ENCODE measurements at regions of chr12 and their contacts with region 1.

Region 1: DNA sequence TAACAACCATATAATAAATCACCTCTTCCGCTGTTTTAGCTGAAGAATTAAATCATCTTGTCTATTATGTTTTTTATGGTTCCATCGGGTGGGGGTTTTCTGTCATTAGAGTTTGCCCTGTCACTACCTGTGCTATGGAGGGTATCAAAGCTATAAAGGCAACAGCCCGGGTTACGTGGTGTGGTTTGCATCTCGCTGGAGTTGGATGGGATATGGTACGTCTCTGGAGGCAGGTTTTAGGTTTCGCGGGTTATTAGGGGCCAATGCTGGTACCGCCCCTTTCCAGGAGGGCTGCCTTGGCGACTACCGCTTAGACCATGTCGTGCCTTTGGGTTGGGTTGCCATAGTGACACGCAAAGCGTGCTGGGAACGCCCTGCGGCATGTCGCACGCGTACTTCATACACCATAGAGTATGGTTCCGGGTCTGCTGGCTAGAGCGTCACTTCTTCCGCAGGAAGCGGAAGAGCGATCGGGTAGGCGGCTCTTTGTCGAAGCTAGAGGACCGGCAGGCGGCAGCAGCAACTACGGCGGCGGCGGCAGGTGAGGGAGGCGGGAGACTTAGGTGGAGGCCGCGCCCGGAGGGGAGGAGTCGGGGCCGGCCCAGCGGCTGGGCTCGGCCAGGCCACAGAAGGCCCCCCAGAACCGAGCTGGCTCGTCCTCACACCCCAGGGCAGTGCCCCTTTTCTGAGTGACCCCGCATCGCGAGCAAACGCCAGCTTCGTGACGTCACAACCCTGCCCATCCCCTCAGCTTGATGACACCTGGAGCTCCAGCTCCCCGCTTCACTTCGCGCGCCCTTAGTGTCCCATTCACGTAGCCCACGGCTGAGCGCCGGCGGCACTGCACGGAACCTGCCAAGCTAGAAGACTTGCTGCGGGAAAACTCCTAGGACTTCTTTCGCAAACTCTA is at the start of gene ZC3H10:
- DNase-seq: peak; percentile 97 to 100
- ATAC-seq: peak; percentile 74 to 82
- H3K4me3 ChIP-seq: peak within 1 kb of the TSS; percentile 71
- H3K27ac ChIP-seq: peak within 1 kb of the TSS; percentile 91 to 96
- H3K4me1 ChIP-seq: peaks cover 20% of the 10 kb centered on the region
- CTCF ChIP-seq: peak; percentile 36
- EP300 ChIP-seq: no peak
- POLR2A ChIP-seq: peak; percentile 96
- RAD21 ChIP-seq: 0 out of 5 replicates have a peak, but pooled peaks of 1 of the 2 experiments have one; percentile 10
- polyA plus RNA-seq, gene ZC3H10: 2.1 and 2.7 TPM in 2 replicates

Region 2: DNA sequence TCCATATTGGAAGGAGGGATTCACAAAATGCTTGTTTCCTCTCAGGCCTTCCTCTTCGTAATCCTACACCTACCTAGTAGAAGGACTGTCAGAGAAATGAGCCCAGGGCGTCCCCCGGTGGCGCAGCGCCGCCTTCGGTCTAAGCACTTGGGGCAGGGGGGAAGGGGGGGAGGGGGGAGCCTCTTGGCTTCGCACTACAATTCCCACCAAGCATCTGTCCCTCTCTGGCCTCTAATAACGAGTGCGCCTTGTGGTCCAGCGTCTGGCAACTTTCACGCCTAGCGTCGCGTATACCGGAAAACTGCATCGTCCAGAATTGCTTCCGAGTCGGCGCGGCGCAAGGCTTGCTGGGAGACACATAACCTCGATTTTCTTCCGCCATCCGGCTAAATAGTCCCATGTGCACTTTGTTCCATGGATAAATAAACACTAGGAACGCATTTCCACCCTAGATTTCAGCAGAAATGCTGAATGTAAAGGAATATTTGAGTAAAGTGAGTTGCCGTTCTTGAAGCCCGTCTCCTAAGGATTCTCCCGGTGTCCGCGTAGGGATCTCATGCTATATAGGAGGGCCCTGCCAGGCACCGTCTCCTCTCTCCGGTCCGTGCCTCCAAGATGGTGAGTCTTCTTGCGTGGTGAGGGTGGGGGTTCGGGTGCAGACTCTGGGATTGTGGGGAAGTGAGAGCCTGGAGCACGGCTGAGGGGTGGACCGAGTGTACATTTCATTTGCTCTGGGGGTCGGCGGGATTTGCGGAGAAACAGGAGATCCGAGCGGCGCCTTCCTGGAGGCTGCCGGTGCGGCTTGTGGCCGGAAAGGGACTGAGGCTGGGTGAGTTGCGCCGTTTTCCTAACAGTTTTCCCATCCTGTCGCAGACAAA is 76.2 kb before region 1 on chr12 and contains the start of gene RPS26:
- CTCF ChIA-PET with region 1: interaction called, 12 read pairs
- POLR2A ChIA-PET with region 1: interaction called, 7 read pairs
- DNase-seq: peak; percentile 91 to 100
- ATAC-seq: peak; percentile 96 to 97
- H3K4me3 ChIP-seq: peak within 1 kb of the TSS; percentile 74
- H3K27ac ChIP-seq: peak within 1 kb of the TSS; percentile 90 to 99
- H3K4me1 ChIP-seq: peaks cover 16% of the 10 kb centered on the region
- CTCF ChIP-seq: peak; percentile 71
- EP300 ChIP-seq: no peak
- POLR2A ChIP-seq: peak; percentile 99
- RAD21 ChIP-seq: peak; percentile 70 to 83
- polyA plus RNA-seq, gene RPS26: 513 and 524 TPM in 2 replicates

Region 3: DNA sequence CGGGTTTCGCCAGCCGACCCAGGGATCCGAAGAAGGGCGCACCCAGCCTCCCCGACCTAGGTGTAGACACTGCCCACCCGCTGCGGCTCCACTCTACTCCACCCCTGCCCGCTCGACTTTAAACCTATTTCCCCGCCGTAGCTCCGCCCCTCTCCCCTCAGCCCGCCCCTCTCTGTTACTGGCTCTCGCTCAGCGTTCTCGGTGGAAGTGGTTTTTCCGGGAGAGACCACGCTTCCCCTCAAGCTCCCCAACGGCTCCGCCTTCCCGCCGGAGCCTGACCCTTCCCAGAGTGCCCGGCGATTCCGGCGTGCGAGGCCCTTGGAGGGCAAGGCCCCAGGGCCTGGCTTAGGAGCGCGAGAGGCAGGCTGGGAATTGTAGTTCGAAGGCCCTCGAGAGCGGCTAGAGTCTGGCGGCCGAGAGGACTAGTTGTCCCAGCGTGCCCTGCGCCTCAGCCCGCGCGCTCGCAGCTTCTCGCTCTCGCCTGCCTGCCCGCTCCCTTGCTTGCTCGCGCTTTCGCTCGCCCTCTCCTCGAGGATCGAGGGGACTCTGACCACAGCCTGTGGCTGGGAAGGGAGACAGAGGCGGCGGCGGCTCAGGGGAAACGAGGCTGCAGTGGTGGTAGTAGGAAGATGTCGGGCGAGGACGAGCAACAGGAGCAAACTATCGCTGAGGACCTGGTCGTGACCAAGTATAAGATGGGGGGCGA is 13.8 kb before region 1 on chr12 and contains the start of gene PA2G4:
- CTCF ChIA-PET with region 1: interaction called, 29 read pairs
- POLR2A ChIA-PET with region 1: interaction called, 77 read pairs
- DNase-seq: peak; percentile 99
- ATAC-seq: peak; percentile 98 to 99
- H3K4me3 ChIP-seq: peak within 1 kb of the TSS; percentile 85
- H3K27ac ChIP-seq: peak within 1 kb of the TSS; percentile 94
- H3K4me1 ChIP-seq: peaks cover 24% of the 10 kb centered on the region
- CTCF ChIP-seq: no peak
- EP300 ChIP-seq: no peak; a peak in 1 of 5 replicates
- POLR2A ChIP-seq: peak; percentile 99
- RAD21 ChIP-seq: no peak
- polyA plus RNA-seq, gene PA2G4: 452 and 717 TPM in 2 replicates

Region 4: DNA sequence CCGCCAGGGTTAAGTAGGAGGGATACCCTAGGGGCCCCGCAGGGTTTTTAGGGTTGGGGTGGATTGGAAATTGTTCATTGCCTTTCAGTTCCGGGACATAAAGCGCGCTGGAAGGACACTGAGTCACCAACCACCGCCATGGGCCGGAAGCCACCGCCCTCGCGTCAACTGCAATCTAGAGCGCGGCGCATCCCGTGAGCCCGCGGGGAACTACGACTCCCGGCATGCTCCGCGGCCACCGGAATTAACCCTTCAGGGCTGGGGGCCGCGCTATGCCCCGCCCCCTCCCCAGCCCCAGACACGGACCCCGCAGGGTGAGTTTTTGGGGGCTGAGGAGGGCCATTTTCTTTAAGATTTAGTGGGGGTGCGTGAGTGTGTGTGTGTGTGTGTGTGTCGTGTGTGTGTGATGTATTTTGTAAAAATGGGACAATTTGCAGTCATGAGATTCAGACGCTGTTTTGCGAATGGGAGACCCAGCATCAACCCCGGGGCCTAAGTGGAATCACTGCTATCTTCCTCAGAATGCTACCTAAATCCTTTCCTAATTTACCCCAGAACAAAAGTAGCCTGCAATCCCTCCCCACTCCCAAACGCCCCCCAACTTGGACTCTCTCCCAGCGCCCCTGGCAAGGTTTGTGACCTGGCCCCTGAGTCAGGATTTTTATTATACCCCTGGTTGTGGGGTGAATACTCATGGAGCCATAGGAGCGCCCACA is 34.4 kb after region 1 on chr12 and contains the start of gene MYL6B:
- CTCF ChIA-PET with region 1: interaction called, 32 read pairs
- POLR2A ChIA-PET with region 1: no interaction called
- DNase-seq: peak; percentile 94
- ATAC-seq: peak; percentile 89 to 93
- H3K4me3 ChIP-seq: peak within 1 kb of the TSS; percentile 53
- H3K27ac ChIP-seq: peak within 1 kb of the TSS; percentile 92 to 93
- H3K4me1 ChIP-seq: peaks cover 21% of the 10 kb centered on the region; the same call in 2 of the 3 replicates
- CTCF ChIP-seq: no peak
- EP300 ChIP-seq: no peak
- POLR2A ChIP-seq: peak; percentile 71
- RAD21 ChIP-seq: no peak
- polyA plus RNA-seq, gene MYL6B: 48.2 and 67.0 TPM in 2 replicates

Region 5: GRCh38 chr12:56172831-56173230 is 54.8 kb after region 1 on chr12:
- CTCF ChIA-PET with region 1: interaction called, 17 read pairs
- POLR2A ChIA-PET with region 1: interaction called, 3 read pairs
- DNase-seq: no peak
- ATAC-seq: no peak
- H3K4me3 ChIP-seq: no peak overlapping the region
- H3K27ac ChIP-seq: no peak overlapping the region
- H3K4me1 ChIP-seq: no peaks in the 10 kb centered on the region
- CTCF ChIP-seq: no peak
- EP300 ChIP-seq: no peak
- POLR2A ChIP-seq: no peak
- RAD21 ChIP-seq: no peak

Region 6: GRCh38 chr12:56258057-56258819 is 140.2 kb after region 1 on chr12 and contains the start of gene ANKRD52:
- CTCF ChIA-PET with region 1: interaction called, 19 read pairs
- POLR2A ChIA-PET with region 1: no interaction called
- DNase-seq: peak; percentile 80 to 88
- ATAC-seq: peak; percentile 86 to 89
- H3K4me3 ChIP-seq: peak within 1 kb of the TSS; percentile 94
- H3K27ac ChIP-seq: peak within 1 kb of the TSS; percentile 92 to 97
- H3K4me1 ChIP-seq: peaks cover 47% of the 10 kb centered on the region
- CTCF ChIP-seq: peak; percentile 87
- EP300 ChIP-seq: no peak
- POLR2A ChIP-seq: peak; percentile 65
- RAD21 ChIP-seq: 0 out of 5 replicates have a peak, but pooled peaks of 1 of the 2 experiments have one; percentile 39
- polyA plus RNA-seq, gene ANKRD52: 26.1 and 35.1 TPM in 2 replicates

Region 7: GRCh38 chr12:56593909-56594621 is 476.0 kb after region 1 on chr12:
- CTCF ChIA-PET with region 1: no interaction called
- POLR2A ChIA-PET with region 1: no interaction called
- DNase-seq: peak; percentile 75 to 78
- ATAC-seq: peak; percentile 71 to 82
- H3K4me3 ChIP-seq: no peak overlapping the region
- H3K27ac ChIP-seq: no peak overlapping the region
- H3K4me1 ChIP-seq: 0 out of 3 replicates have a peak, but pooled peaks cover 4% of the 10 kb centered on the region
- CTCF ChIP-seq: peak; percentile 79
- EP300 ChIP-seq: no peak
- POLR2A ChIP-seq: no peak
- RAD21 ChIP-seq: peak; percentile 68 to 85

Measured in A549 (cell line).